OCI-LY7 (cell line): ENCODE measurements at regions of chr11 and their contacts with region 1.

Region 1: DNA sequence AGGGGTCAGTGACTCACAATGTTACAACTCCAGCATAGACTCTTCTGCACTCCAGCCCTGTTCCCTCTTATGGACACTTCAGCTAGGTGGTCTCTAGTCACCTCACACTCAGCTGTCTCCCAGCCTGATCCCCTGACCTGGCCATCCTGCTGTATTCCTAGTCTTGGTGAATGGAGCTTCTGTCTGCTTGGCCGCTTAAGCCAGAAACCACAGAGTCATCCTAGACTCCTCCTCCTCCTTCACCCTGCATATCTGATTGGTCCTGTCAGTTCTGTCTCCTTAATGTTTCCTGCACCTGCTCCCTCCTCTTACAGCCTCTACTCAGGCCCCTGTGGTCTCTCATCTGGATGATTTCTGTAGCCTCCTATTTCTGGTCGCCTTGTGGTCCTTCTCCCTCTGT is 144.9 kb downstream of the HIPK3 start:
- DNase-seq: peak; percentile 85
- H3K4me3 ChIP-seq: peak overlapping the region; percentile 54
- H3K27ac ChIP-seq: peak overlapping the region; percentile 88
- H3K4me1 ChIP-seq: peaks cover 88% of the 10 kb centered on the region
- CTCF ChIP-seq: no peak

Region 2: DNA sequence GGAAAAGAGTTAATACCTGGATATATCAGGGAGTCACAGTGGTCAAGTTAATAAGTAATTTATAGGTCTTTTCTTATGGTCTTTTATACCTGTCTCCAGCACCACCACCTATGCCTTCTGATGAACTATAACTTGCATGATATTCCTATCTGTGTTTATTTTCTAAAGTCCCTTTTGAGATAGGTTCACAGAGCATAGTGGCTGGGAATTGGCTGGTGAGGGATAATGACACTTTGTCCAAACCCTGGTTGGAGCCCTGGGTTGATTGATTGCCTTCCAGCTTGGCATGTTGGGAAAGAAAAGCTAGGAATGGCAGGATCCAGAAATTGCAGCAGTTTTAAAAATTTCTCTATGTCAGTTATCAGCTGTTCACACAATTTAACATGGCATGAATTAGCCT is 121.7 kb before region 1 on chr11:
- CTCF ChIA-PET with region 1: no interaction called
- POLR2A ChIA-PET with region 1: no interaction called
- intact Hi-C with region 1: no loop called
- DNase-seq: no peak
- H3K4me3 ChIP-seq: no peak overlapping the region
- H3K27ac ChIP-seq: no peak overlapping the region
- H3K4me1 ChIP-seq: no peaks in the 10 kb centered on the region
- CTCF ChIP-seq: no peak

Region 3: DNA sequence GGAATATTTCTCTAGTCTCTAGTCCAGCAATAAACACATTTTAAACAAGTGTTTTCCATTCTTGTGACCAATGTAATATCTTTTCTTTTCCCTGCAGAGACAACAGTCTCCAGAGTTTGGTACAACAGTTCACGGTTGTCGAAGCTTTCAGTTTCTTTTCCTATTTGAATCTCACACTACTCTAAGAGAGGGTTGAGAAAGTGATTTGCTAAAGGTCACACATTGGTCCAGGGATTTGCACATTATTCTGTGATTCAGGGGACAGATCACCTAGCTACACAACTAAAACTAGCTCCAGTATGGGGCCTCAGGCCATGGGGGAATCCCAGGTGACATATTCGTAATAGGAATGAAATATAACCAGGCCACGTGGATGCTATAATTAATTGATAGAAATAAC is 12.4 kb before region 1 on chr11:
- CTCF ChIA-PET with region 1: interaction called, 4 read pairs
- POLR2A ChIA-PET with region 1: interaction called, 76 read pairs
- intact Hi-C with region 1: loop called (anchors 2 kb)
- DNase-seq: peak; percentile 52
- H3K4me3 ChIP-seq: peak overlapping the region; percentile 57
- H3K27ac ChIP-seq: peak overlapping the region; percentile 96
- H3K4me1 ChIP-seq: peaks cover 95% of the 10 kb centered on the region
- CTCF ChIP-seq: no peak

Region 4: GRCh38 chr11:33419924-33420323 is 17.9 kb after region 1 on chr11:
- CTCF ChIA-PET with region 1: interaction called, 3 read pairs
- POLR2A ChIA-PET with region 1: interaction called, 16 read pairs
- intact Hi-C with region 1: no loop called
- DNase-seq: no peak
- H3K4me3 ChIP-seq: no peak overlapping the region
- H3K27ac ChIP-seq: no peak overlapping the region
- H3K4me1 ChIP-seq: peaks cover 34% of the 10 kb centered on the region
- CTCF ChIP-seq: no peak

Region 5: GRCh38 chr11:33736148-33736809 is 334.2 kb after region 1 on chr11 and contains the start of gene CD59:
- CTCF ChIA-PET with region 1: interaction called, 21 read pairs
- POLR2A ChIA-PET with region 1: interaction called, 4 read pairs
- intact Hi-C with region 1: no loop called
- DNase-seq: peak; percentile 83
- H3K4me3 ChIP-seq: peak within 1 kb of the TSS; percentile 86
- H3K27ac ChIP-seq: peak within 1 kb of the TSS; percentile 21
- H3K4me1 ChIP-seq: peaks cover 11% of the 10 kb centered on the region
- CTCF ChIP-seq: no peak
- total RNA-seq, gene CD59: 12.7 and 20.2 TPM in 2 replicates

Region 6: GRCh38 chr11:33772300-33772699 is 370.2 kb after region 1 on chr11:
- CTCF ChIA-PET with region 1: no interaction called
- POLR2A ChIA-PET with region 1: no interaction called
- intact Hi-C with region 1: no loop called
- DNase-seq: no peak
- H3K4me3 ChIP-seq: no peak overlapping the region
- H3K27ac ChIP-seq: no peak overlapping the region
- H3K4me1 ChIP-seq: peaks cover 20% of the 10 kb centered on the region
- CTCF ChIP-seq: no peak